Naive thymus-derived CD4-positive, alpha-beta T cell (primary cell): ENCODE measurements at regions of chr12 and their contacts with region 1.

Region 1: GRCh38 chr12:117063162-117063911 is 35.9 kb downstream of the TESC start:
- DNase-seq: peak in 8 of 9 donors; percentile 14 to 52 (median 39)
- ATAC-seq: peak; percentile 67
- H3K4me3 ChIP-seq: peak overlapping the region; percentile 28
- H3K4me3 Mint-ChIP-seq: peak overlapping the region; percentile 67 to 87 (median 80)
- H3K27ac ChIP-seq: peak overlapping the region; percentile 28
- H3K27ac Mint-ChIP-seq: peak overlapping the region; percentile 81 to 95 (median 91)
- H3K4me1 ChIP-seq: peaks cover 21% of the 10 kb centered on the region in 2 donors
- H3K4me1 Mint-ChIP-seq: peaks cover 29 to 59% (median 48%) of the 10 kb centered on the region in 7 donors
- H3K27me3 ChIP-seq: no peaks in the 10 kb centered on the region
- H3K27me3 Mint-ChIP-seq: no peaks in the 10 kb centered on the region

Region 2: DNA sequence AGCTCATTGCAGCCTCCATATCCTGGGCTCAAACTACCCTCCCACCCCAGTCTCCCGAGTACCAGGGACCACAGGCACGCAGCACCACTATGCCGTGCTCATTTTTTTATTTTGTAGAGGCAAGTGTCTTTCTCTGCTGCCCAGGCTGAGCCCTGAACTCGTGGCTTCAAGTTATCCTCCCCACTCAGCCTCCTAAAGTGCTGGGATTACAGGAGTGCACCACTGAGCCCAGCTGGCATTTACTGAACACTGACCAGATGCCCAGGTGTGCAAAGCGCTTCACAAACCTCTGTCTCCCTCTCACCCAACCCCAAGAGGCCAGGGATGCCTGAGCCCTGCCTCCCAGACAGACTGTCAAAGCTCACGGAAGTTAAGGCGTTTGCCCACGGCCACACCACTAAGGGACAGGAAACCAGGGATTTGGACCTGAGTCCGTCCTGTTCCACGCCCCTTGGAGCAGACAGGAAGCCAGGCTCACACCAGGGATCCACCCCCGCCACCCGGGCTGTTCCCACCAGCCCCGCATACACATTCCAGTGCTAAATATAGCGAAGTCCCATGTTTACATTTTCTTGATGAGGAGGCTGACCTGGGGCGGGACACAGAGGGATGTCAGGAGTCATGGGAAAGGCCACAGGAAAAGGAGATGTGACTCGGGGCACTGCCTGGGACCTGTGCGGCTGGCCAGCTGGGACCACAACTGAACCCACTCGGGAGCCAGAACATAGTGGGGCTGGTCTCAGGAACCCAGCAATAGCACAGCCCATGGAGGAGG is 15.3 kb before region 1 on chr12:
- CTCF ChIA-PET with region 1: no interaction called
- POLR2A ChIA-PET with region 1: no interaction called
- intact Hi-C with region 1: no loop called
- DNase-seq: no peak
- ATAC-seq: no peak
- H3K4me3 ChIP-seq: no peak overlapping the region
- H3K4me3 Mint-ChIP-seq: no peak overlapping the region
- H3K27ac ChIP-seq: no peak overlapping the region
- H3K27ac Mint-ChIP-seq: no peak overlapping the region
- H3K4me1 ChIP-seq: peaks cover 0 to 4% of the 10 kb centered on the region in 2 donors
- H3K4me1 Mint-ChIP-seq: peaks cover 0 to 4% (median 0%) of the 10 kb centered on the region in 7 donors
- H3K27me3 ChIP-seq: no peaks in the 10 kb centered on the region
- H3K27me3 Mint-ChIP-seq: peaks cover 0 to 3% (median 0%) of the 10 kb centered on the region in 5 donors

Region 3: DNA sequence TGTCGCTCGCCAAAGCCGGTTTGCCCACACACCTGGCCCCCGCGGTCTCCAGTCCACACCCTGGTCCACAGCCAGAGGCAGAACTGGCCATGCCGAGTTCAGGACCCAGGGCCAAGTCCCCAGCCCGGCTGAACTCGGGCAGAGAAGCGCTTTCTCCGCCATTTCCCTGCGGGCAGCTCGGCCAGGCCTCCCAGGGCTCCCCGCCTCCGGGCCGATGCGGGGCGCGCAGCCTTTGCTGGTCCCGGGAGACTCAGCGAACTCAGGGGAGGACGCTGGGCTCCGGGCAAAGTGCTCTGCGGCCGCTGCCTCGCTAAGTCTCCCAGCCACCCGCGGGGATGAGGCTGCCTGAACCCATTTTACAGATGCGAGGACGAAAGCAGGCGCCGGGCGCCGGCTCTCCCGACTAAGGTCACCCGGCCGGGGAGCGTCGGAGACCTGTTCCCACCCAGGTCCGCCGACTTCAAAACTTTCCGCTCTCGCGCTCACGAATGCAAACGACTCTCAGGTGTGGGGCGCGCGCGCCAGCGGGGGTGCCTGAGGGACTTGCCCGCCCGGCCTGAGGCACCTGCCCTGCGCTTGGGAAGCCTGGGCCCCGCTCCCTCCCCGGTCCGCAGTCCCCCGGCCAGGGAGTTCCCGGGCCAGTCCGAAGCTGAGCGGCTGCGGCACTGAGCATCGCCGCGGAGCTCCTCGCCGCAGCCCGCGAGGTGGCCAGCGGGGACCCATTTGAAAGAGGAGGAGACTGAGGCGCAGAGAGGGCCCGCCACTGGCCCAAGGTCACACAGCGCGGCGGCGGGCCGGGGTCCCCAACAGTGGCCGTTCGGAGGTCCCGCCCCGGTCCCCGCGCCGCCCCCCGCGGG is 35.3 kb after region 1 on chr12:
- CTCF ChIA-PET with region 1: no interaction called
- POLR2A ChIA-PET with region 1: no interaction called
- intact Hi-C with region 1: loop called in 1 of 2 experiments (anchors 1 kb)
- DNase-seq: peak in 3 of 9 donors; percentile 8 to 11 (median 11)
- ATAC-seq: peak; percentile 30
- H3K4me3 ChIP-seq: peak overlapping the region; percentile 56
- H3K4me3 Mint-ChIP-seq: peak overlapping the region; percentile 68 to 85 (median 79)
- H3K27ac ChIP-seq: no peak overlapping the region
- H3K27ac Mint-ChIP-seq: peak overlapping the region in 1 of 9 donors; percentile 23
- H3K4me1 ChIP-seq: peaks cover 4 to 5% of the 10 kb centered on the region in 2 donors
- H3K4me1 Mint-ChIP-seq: peaks cover 0 to 27% (median 9%) of the 10 kb centered on the region in 7 donors
- H3K27me3 ChIP-seq: peaks cover 0 to 10% of the 10 kb centered on the region in 2 donors
- H3K27me3 Mint-ChIP-seq: peaks cover 16 to 37% (median 21%) of the 10 kb centered on the region in 5 donors